ENCODE measurements at regions of chr6 and their contacts with region 1.

Region 1: DNA sequence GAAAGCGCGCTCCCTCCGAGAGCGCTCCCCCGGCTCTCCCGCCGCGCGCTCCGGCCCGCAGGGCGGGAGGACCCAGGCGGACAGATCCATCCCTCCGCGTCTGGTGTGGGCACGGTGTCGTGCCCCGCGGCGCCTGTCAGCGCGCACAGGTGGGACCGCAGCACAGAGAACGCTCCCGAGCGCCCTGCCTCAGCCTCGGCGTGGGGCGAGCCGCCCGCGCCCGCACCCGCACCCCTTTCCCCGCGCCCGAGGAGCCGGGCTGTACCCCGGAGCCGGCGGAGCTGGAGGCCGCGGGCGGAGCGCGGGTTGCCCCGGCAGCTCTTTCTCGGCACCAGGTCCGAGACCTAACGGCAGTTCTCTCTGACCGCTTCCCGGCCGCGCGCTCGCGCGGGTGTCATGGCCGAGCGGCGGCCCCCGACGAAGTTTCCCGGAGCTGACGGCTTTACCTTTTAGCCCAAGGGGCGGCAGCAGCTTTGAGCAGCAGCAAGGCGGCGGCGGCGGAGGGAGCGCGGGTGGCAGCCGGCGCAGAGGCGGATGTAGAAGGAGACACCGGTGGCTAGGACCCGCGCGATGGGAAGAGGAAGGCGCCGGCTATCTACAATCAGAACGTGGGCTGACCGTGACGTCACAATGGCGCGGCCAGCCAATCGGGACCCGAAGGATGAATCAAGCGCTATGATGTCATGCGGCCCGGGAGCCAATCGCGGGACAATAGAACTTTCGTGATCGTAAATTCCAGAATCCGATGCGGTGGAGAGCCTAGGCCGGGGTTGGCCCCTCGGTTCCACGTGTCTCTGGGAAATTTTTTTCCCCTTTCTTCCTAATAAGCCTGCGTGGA is at the start of gene ELOVL5:
- DNase-seq: peak; percentile 78 to 97 (median 87)
- ATAC-seq: peak; percentile 87
- H3K4me3 ChIP-seq: peak within 1 kb of the TSS; percentile 65
- H3K4me3 Mint-ChIP-seq: peak within 1 kb of the TSS; percentile 91 to 100 (median 98)
- H3K27ac ChIP-seq: peak within 1 kb of the TSS; percentile 89
- H3K27ac Mint-ChIP-seq: peak within 1 kb of the TSS; percentile 85 to 99 (median 96)
- H3K4me1 ChIP-seq: peaks cover 23 to 30% of the 10 kb centered on the region in 2 donors
- H3K4me1 Mint-ChIP-seq: peaks cover 34 to 48% (median 46%) of the 10 kb centered on the region in 7 donors
- H3K27me3 ChIP-seq: no peaks in the 10 kb centered on the region
- H3K27me3 Mint-ChIP-seq: peaks cover 0 to 18% (median 0%) of the 10 kb centered on the region in 5 donors
- total RNA-seq, gene ELOVL5: 49.7 to 124 (median 71.3) TPM

Region 2: DNA sequence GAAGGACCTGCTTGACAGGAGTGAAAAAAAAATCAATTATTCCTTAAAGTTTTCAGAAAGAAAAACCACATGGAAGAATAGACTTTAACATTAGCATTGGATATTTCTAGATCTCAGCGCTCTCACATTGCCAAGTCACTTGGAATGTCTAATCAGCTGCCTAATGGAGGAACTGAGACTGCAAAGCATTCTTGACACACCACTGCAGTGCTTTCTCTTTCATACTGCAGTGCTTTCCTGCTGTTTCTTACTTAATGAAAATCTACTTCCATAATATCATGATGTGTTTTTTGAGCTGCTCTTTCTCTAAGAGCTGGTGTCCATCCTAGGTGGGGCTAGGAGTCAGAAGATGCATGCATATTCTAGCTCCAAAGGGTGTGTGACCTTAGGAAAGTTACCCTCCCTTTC is 1043.6 kb before region 1 on chr6:
- CTCF ChIA-PET with region 1: no interaction called
- POLR2A ChIA-PET with region 1: no interaction called
- intact Hi-C with region 1: loop called in 1 of 2 experiments (anchors 10 kb)
- DNase-seq: peak in 1 of 9 donors; percentile 5
- ATAC-seq: peak; percentile 62
- H3K4me3 ChIP-seq: peak overlapping the region; percentile 20
- H3K4me3 Mint-ChIP-seq: peak overlapping the region; percentile 38 to 84 (median 74)
- H3K27ac ChIP-seq: peak overlapping the region; percentile 64
- H3K27ac Mint-ChIP-seq: peak overlapping the region; percentile 68 to 98 (median 96)
- H3K4me1 ChIP-seq: peaks cover 53 to 69% of the 10 kb centered on the region in 2 donors
- H3K4me1 Mint-ChIP-seq: peaks cover 47 to 88% (median 78%) of the 10 kb centered on the region in 7 donors
- H3K27me3 ChIP-seq: no peaks in the 10 kb centered on the region
- H3K27me3 Mint-ChIP-seq: no peaks in the 10 kb centered on the region

Region 3: DNA sequence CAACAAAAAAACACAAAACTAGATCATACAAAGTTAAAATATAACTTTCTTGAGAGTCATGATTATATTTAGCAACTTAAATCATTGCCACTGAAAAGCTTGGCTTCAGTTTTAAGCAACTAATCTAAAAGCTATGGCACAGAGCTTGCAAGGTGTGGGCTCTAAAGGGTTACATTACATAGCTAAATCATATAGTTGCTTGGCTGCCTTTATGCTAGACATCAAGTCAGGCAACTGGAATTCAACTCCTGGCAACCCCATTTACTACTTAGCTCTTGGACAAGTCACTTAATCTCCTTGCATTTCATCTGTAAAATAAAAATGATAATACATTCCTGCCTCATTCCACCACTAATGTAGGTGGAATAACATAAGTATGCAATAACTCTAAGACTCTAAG is 159.0 kb before region 1 on chr6:
- CTCF ChIA-PET with region 1: interaction called, 7 read pairs
- POLR2A ChIA-PET with region 1: interaction called, 3 read pairs
- intact Hi-C with region 1: loop called in 1 of 2 experiments (anchors 1 kb)
- DNase-seq: no peak
- ATAC-seq: no peak
- H3K4me3 ChIP-seq: no peak overlapping the region
- H3K4me3 Mint-ChIP-seq: no peak overlapping the region
- H3K27ac ChIP-seq: no peak overlapping the region
- H3K27ac Mint-ChIP-seq: no peak overlapping the region
- H3K4me1 ChIP-seq: peaks cover 12 to 26% of the 10 kb centered on the region in 2 donors
- H3K4me1 Mint-ChIP-seq: peaks cover 8 to 39% (median 29%) of the 10 kb centered on the region in 7 donors
- H3K27me3 ChIP-seq: no peaks in the 10 kb centered on the region
- H3K27me3 Mint-ChIP-seq: peaks cover 0 to 2% (median 0%) of the 10 kb centered on the region in 5 donors

Region 4: DNA sequence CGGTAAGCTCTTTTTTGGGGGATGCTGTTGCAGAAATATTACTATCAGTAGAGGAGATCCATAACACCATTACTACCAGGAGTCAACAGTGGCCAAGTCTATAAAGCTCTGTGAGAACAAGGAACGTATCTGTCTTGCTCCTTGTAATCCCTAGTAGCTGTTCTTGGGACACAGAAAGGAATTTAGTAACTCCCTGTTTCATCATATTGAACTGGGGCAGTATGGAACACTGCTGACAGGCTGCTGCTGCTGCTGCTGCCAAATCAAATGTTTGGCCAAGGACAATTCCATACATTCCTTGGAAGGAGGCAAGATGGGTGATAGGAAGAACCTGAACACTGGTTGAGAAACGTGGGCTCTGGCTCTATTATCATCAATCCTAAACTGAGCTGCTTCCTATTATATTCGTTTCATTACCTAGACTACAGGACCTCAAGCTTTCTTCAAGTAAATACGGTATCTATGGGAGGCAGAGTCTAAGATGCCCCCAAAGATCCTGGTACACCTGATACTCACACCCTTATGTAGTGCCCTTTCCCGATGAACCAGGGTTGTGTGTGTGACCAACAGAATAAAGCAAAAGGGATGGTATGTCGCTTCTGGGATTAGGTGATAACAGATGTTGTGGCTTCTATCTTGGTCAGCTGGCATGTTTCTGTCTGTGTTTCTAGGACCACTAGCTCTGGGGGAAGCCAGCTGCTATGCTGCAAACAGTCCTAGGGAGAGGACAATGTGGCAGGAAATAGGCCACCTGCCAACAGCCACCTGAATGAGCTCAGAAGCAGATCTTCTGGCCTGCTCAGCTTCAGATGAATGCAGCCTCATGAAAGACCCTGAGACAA is 39.3 kb before region 1 on chr6:
- CTCF ChIA-PET with region 1: interaction called, 5 read pairs
- POLR2A ChIA-PET with region 1: interaction called, 13 read pairs
- intact Hi-C with region 1: no loop called
- DNase-seq: peak in 1 of 9 donors; percentile 23
- ATAC-seq: peak; percentile 56
- H3K4me3 ChIP-seq: no peak overlapping the region
- H3K4me3 Mint-ChIP-seq: peak overlapping the region in 6 of 10 donors; percentile 3 to 46 (median 18)
- H3K27ac ChIP-seq: no peak overlapping the region
- H3K27ac Mint-ChIP-seq: peak overlapping the region in 8 of 9 donors; percentile 45 to 76 (median 62)
- H3K4me1 ChIP-seq: peaks cover 40 to 77% of the 10 kb centered on the region in 2 donors
- H3K4me1 Mint-ChIP-seq: peaks cover 49 to 85% (median 80%) of the 10 kb centered on the region in 7 donors
- H3K27me3 ChIP-seq: no peaks in the 10 kb centered on the region
- H3K27me3 Mint-ChIP-seq: no peaks in the 10 kb centered on the region

Region 5: GRCh38 chr6:53410508-53411258 is 62.1 kb after region 1 on chr6:
- CTCF ChIA-PET with region 1: interaction called, 3 read pairs
- POLR2A ChIA-PET with region 1: interaction called, 5 read pairs
- intact Hi-C with region 1: loop called in 1 of 2 experiments (anchors 1 kb)
- DNase-seq: peak; percentile 21 to 72 (median 63)
- ATAC-seq: peak; percentile 98
- H3K4me3 ChIP-seq: no peak overlapping the region
- H3K4me3 Mint-ChIP-seq: no peak overlapping the region
- H3K27ac ChIP-seq: no peak overlapping the region
- H3K27ac Mint-ChIP-seq: peak overlapping the region in 1 of 9 donors; percentile 22
- H3K4me1 ChIP-seq: peaks cover 0 to 3% of the 10 kb centered on the region in 2 donors
- H3K4me1 Mint-ChIP-seq: peaks cover 0 to 6% (median 3%) of the 10 kb centered on the region in 7 donors
- H3K27me3 ChIP-seq: no peaks in the 10 kb centered on the region
- H3K27me3 Mint-ChIP-seq: peaks cover 0 to 5% (median 0%) of the 10 kb centered on the region in 5 donors

Region 6: DNA sequence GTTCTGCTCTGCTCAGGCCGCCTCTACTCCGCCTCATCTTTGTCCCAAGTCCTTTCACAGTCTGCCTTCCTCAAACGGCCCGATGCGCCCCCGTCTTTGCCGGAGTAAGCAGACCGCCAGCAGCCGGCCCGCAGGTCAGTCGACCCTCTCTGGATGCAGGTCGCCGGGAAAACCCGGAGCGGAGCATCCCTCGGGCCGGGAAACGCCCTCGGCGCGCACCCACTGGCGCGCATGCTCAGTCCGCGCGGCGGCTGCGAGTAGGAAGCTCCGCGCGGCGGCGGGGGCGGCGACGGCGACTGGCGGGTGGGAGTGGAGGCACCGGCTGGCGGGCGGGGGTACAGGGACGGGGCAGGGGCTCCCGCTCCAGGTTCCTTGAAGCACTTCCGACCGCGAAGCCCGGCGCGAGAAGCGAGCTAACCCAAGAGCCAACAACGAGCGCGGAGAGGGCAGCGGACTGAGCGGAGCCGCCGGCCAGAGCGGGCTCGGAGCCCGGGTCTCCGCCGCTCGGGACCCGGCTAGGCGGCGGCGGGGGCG is 446.2 kb after region 1 on chr6 and contains the start of gene LRRC1:
- CTCF ChIA-PET with region 1: no interaction called
- POLR2A ChIA-PET with region 1: no interaction called
- intact Hi-C with region 1: loop called in 1 of 2 experiments (anchors 10 kb)
- DNase-seq: peak; percentile 61 to 94 (median 76)
- ATAC-seq: peak; percentile 78
- H3K4me3 ChIP-seq: peak within 1 kb of the TSS; percentile 96
- H3K4me3 Mint-ChIP-seq: peak within 1 kb of the TSS; percentile 93 to 98 (median 96)
- H3K27ac ChIP-seq: peak within 1 kb of the TSS; percentile 43
- H3K27ac Mint-ChIP-seq: peak within 1 kb of the TSS in 8 of 9 donors; percentile 75 to 91 (median 86)
- H3K4me1 ChIP-seq: peaks cover 7 to 13% of the 10 kb centered on the region in 2 donors
- H3K4me1 Mint-ChIP-seq: peaks cover 21 to 33% (median 28%) of the 10 kb centered on the region in 7 donors
- H3K27me3 ChIP-seq: peaks cover 0 to 8% of the 10 kb centered on the region in 2 donors
- H3K27me3 Mint-ChIP-seq: peaks cover 7 to 55% (median 18%) of the 10 kb centered on the region in 5 donors
- total RNA-seq, gene LRRC1: 1.2 to 3.6 (median 3.4) TPM